ENCODE measurements at regions of chr2 and their contacts with region 1.

Region 1: DNA sequence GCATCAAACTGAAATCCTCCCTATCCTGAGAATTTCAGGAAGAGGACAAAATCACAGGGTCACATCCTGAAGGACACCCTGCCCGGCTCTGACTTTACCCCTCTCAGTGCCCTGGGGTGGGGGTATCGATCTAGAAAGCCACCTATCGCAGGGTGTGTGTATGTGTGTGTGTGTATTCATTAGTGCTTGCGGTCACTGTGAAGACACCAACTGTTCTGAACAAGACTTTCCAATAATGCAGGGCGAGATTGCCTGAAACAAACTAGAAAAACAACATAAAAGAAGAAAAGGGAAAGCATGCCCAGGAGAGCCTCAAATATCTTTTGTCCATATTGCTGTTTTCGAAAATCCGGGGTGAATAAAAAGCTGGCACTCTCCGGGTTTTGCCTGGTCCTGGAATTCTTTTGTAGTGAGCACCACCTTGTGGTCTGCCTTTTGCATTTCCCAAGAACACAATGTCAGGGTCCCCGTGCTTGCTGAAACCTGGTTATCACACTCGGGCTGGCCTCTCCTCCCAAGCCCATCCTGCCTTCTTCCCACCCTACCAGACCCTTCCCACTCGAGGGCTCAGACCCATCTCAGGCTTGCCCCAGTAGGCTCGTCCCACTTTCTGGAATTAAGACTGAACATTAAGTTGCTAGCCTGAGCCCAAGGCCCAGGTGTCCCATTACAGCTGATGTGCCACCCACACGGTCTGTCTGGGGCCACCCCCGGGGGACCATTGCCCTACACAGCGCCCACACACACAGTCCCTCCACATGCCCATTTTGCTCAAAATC is 25.0 kb upstream of the COPS8 start:
- DNase-seq: no peak
- H3K4me3 ChIP-seq: no peak overlapping the region
- H3K27ac ChIP-seq: no peak overlapping the region
- H3K4me1 ChIP-seq: peaks cover 0 to 11% (median 9%) of the 10 kb centered on the region in 4 donors
- H3K27me3 ChIP-seq: no peaks in the 10 kb centered on the region
- CTCF ChIP-seq: peak; percentile 49 to 71 (median 69)
- EP300 ChIP-seq: no peak
- POLR2A ChIP-seq: no peak

Region 2: GRCh38 chr2:236352761-236353593 is 707.7 kb before region 1 on chr2:
- intact Hi-C with region 1: loop called (anchors 2 kb)
- DNase-seq: no peak
- H3K4me3 ChIP-seq: no peak overlapping the region
- H3K27ac ChIP-seq: no peak overlapping the region
- H3K4me1 ChIP-seq: no peaks in the 10 kb centered on the region
- H3K27me3 ChIP-seq: no peaks in the 10 kb centered on the region
- CTCF ChIP-seq: peak; percentile 77 to 83 (median 81)
- EP300 ChIP-seq: no peak
- POLR2A ChIP-seq: no peak